ENCODE measurements at regions of chr5 and their contacts with region 1.

Region 1: GRCh38 chr5:36507332-36507952 is 99.0 kb upstream of the SLC1A3 start:
- DNase-seq: peak; percentile 71
- H3K4me3 ChIP-seq: no peak overlapping the region
- H3K27ac ChIP-seq: no peak overlapping the region
- H3K4me1 ChIP-seq: no peaks in the 10 kb centered on the region
- CTCF ChIP-seq: peak; percentile 97

Region 2: DNA sequence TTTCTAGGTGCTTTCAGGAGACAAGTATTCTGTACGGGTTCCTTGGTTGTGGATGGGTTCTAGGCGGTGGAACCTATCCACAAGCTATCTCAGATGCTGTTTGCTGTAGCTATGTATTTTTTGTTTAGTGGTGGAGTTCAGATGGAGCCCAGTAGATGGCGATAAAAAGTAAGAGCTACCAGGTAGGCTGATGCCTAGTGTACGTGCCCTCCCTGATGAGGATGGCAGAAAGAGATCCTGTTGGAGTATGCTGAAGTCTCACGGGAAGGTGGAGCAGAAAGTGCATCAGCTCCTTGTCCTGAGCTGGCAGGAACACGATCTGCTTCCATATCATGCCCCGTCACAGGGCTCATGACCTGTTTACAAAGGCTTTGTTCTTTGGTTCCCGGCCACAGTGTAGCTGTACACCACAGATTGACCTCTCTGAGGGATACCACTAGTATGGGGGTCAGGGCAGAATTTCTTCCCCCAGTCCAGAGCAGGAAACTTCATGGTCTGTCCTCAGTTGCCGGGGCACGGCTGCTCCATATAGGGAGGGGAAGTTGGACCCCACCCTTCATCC is 428.2 kb before region 1 on chr5:
- CTCF ChIA-PET with region 1: no interaction called
- POLR2A ChIA-PET with region 1: no interaction called
- intact Hi-C with region 1: loop called (anchors 5 kb)
- DNase-seq: peak; percentile 63
- H3K4me3 ChIP-seq: no peak overlapping the region
- H3K27ac ChIP-seq: no peak overlapping the region
- H3K4me1 ChIP-seq: no peaks in the 10 kb centered on the region
- CTCF ChIP-seq: peak; percentile 87

Region 3: DNA sequence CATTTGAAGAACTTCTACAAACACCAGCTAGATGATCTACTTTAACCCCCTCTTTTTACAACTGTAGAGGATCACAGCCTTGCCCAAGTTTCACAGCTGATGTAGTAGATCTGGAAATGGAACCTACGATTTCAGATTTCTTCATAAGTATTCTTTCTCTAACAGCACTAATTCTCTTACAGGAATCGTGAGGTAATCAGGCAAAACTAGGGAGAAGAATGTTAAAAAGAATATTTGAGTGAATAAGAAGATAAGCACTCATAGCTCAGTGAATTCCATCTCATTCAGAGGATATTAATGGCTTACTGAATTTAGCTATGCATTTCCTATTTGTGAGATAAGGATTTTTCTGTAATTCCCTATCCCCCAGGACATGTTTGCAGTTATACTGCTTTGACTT is 307.8 kb before region 1 on chr5:
- CTCF ChIA-PET with region 1: no interaction called
- POLR2A ChIA-PET with region 1: no interaction called
- intact Hi-C with region 1: loop called (anchors 10 kb)
- DNase-seq: no peak
- H3K4me3 ChIP-seq: no peak overlapping the region
- H3K27ac ChIP-seq: no peak overlapping the region
- H3K4me1 ChIP-seq: no peaks in the 10 kb centered on the region
- CTCF ChIP-seq: no peak

Region 4: GRCh38 chr5:36264202-36264760 is 243.2 kb before region 1 on chr5:
- CTCF ChIA-PET with region 1: no interaction called
- POLR2A ChIA-PET with region 1: no interaction called
- intact Hi-C with region 1: loop called (anchors 2 kb)
- DNase-seq: no peak
- H3K4me3 ChIP-seq: no peak overlapping the region
- H3K27ac ChIP-seq: no peak overlapping the region
- H3K4me1 ChIP-seq: peaks cover 28% of the 10 kb centered on the region
- CTCF ChIP-seq: no peak

Region 5: GRCh38 chr5:36414869-36415282 is 92.6 kb before region 1 on chr5:
- CTCF ChIA-PET with region 1: no interaction called
- POLR2A ChIA-PET with region 1: no interaction called
- intact Hi-C with region 1: loop called (anchors 2 kb)
- DNase-seq: peak; percentile 45
- H3K4me3 ChIP-seq: no peak overlapping the region
- H3K27ac ChIP-seq: no peak overlapping the region
- H3K4me1 ChIP-seq: no peaks in the 10 kb centered on the region
- CTCF ChIP-seq: peak; percentile 86